CD8-positive, alpha-beta T cell (primary cell): ENCODE measurements at regions of chr1 and their contacts with region 1.

Region 1: GRCh38 chr1:161225534-161226319 is at the start of gene TOMM40L:
- DNase-seq: peak; percentile 71 to 98 (median 86)
- ATAC-seq: peak; percentile 95
- H3K4me3 ChIP-seq: peak within 1 kb of the TSS; percentile 78 to 95
- H3K4me3 Mint-ChIP-seq: peak within 1 kb of the TSS; percentile 100
- H3K27ac ChIP-seq: peak within 1 kb of the TSS; percentile 43 to 64
- H3K27ac Mint-ChIP-seq: peak within 1 kb of the TSS; percentile 97
- H3K4me1 ChIP-seq: peaks cover 40% of the 10 kb centered on the region
- H3K4me1 Mint-ChIP-seq: peaks cover 46% of the 10 kb centered on the region
- H3K27me3 ChIP-seq: no peaks in the 10 kb centered on the region
- H3K27me3 Mint-ChIP-seq: no peaks in the 10 kb centered on the region
- CTCF ChIP-seq: peak; percentile 63
- total RNA-seq, gene TOMM40L: 4.7 to 4.9 TPM

Region 2: GRCh38 chr1:161165742-161166668 is 59.7 kb before region 1 on chr1 and contains the start of gene PPOX:
- CTCF ChIA-PET with region 1: interaction called, 41 read pairs
- POLR2A ChIA-PET with region 1: interaction called, 7 read pairs
- intact Hi-C with region 1: loop called in 1 of 2 experiments (anchors 1 kb)
- DNase-seq: peak; percentile 81 to 97 (median 92)
- ATAC-seq: peak; percentile 91
- H3K4me3 ChIP-seq: peak within 1 kb of the TSS; percentile 58 to 79
- H3K4me3 Mint-ChIP-seq: peak within 1 kb of the TSS; percentile 88
- H3K27ac ChIP-seq: peak within 1 kb of the TSS; percentile 88 to 91
- H3K27ac Mint-ChIP-seq: peak within 1 kb of the TSS; percentile 98
- H3K4me1 ChIP-seq: peaks cover 29% of the 10 kb centered on the region
- H3K4me1 Mint-ChIP-seq: peaks cover 56% of the 10 kb centered on the region
- H3K27me3 ChIP-seq: no peaks in the 10 kb centered on the region
- H3K27me3 Mint-ChIP-seq: no peaks in the 10 kb centered on the region
- CTCF ChIP-seq: peak; percentile 52
- total RNA-seq, gene PPOX: 18.5 to 19.8 TPM

Region 3: GRCh38 chr1:161201828-161202725 is 23.6 kb before region 1 on chr1 and contains the start of gene NDUFS2:
- CTCF ChIA-PET with region 1: interaction called, 94 read pairs
- POLR2A ChIA-PET with region 1: interaction called, 42 read pairs
- intact Hi-C with region 1: loop called (anchors 1 to 2 kb)
- DNase-seq: peak; percentile 90 to 99 (median 95)
- ATAC-seq: peak; percentile 98
- H3K4me3 ChIP-seq: peak within 1 kb of the TSS; percentile 84 to 93
- H3K4me3 Mint-ChIP-seq: peak within 1 kb of the TSS; percentile 95
- H3K27ac ChIP-seq: peak within 1 kb of the TSS; percentile 87
- H3K27ac Mint-ChIP-seq: peak within 1 kb of the TSS; percentile 98
- H3K4me1 ChIP-seq: peaks cover 58% of the 10 kb centered on the region
- H3K4me1 Mint-ChIP-seq: peaks cover 69% of the 10 kb centered on the region
- H3K27me3 ChIP-seq: no peaks in the 10 kb centered on the region
- H3K27me3 Mint-ChIP-seq: no peaks in the 10 kb centered on the region
- CTCF ChIP-seq: no peak
- total RNA-seq, gene NDUFS2: 53.0 to 63.4 TPM

Region 4: DNA sequence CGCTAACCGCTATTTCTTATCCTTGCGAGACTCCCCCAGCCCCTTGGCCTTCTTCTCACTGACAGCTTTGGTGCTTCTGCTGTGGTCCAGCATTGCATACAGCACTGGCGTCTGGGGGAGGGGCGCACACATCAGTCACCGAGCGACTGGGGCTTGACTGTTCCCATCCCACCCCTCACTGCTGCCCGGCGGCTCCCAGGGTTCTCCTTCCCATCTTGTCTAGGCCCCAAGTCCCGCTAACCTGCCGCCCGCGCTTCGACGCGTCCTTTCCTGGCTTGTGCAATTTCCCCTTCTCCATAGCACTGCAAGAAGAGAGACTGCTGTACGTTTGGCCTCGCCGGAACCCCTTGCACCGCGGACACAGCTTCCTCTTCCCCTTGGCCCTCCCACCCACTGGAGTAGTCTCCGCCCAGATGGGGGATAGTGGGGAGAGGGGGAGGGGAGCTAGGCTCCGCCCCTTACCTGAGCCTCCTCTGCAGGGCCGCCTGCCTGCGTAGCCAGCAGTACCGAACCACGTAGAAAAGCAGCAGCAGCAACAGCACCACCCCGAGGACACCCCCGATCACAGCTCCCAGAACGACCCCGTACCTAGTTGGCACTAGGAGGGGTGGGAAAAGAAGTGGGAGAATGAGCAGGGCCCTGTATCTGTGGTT is 80.3 kb after region 1 on chr1:
- CTCF ChIA-PET with region 1: interaction called, 12 read pairs
- POLR2A ChIA-PET with region 1: interaction called, 12 read pairs
- intact Hi-C with region 1: loop called (anchors 1 kb)
- DNase-seq: peak; percentile 73 to 95 (median 89)
- ATAC-seq: peak; percentile 98
- H3K4me3 ChIP-seq: peak overlapping the region; percentile 74 to 93
- H3K4me3 Mint-ChIP-seq: peak overlapping the region; percentile 97
- H3K27ac ChIP-seq: peak overlapping the region; percentile 70 to 71
- H3K27ac Mint-ChIP-seq: peak overlapping the region; percentile 93
- H3K4me1 ChIP-seq: peaks cover 31% of the 10 kb centered on the region
- H3K4me1 Mint-ChIP-seq: peaks cover 40% of the 10 kb centered on the region
- H3K27me3 ChIP-seq: no peaks in the 10 kb centered on the region
- H3K27me3 Mint-ChIP-seq: no peaks in the 10 kb centered on the region
- CTCF ChIP-seq: peak; percentile 54

Region 5: GRCh38 chr1:161342821-161343220 is 117.1 kb after region 1 on chr1:
- CTCF ChIA-PET with region 1: no interaction called
- POLR2A ChIA-PET with region 1: no interaction called
- intact Hi-C with region 1: no loop called
- DNase-seq: no peak
- ATAC-seq: no peak
- H3K4me3 ChIP-seq: no peak overlapping the region
- H3K4me3 Mint-ChIP-seq: no peak overlapping the region
- H3K27ac ChIP-seq: no peak overlapping the region
- H3K27ac Mint-ChIP-seq: no peak overlapping the region
- H3K4me1 ChIP-seq: no peaks in the 10 kb centered on the region
- H3K4me1 Mint-ChIP-seq: peaks cover 7% of the 10 kb centered on the region
- H3K27me3 ChIP-seq: no peaks in the 10 kb centered on the region
- H3K27me3 Mint-ChIP-seq: no peaks in the 10 kb centered on the region
- CTCF ChIP-seq: no peak

Region 6: DNA sequence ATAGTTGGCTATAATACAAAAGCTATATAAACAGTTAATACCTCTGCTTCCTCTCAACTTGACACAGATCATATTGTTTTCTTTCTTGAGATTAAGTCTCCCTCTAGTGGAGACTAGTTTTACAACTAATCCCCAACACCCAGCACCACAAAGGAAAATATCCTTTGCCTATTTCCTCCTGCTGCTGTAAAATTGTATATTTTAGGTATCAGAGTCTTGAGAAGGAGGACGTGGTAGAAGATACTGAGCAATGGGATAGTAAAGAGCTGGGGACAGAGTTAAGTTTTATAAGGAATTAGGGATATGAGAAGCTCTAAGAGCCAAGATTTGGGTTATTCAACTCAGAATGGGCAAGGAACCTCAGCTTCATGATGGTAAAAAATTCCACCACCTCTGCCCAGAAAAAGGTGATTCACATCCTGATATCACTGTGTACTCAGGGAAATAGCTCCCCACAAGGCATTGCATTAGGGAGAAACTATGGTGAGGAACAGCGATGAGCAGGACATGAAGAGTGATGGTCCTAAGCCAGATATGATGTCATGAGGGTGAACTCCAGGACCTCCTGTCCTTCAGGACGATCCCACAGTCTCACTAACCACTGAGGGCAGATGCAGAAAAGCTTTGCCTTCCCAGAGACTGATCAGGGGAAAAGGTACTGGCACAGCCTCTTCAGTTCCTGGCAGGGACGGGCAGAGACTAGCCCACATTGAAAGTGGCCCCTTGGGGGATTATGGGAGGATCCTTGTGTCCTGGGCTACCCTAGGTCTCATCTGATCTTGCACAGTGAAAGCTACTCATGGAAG is 156.7 kb after region 1 on chr1:
- CTCF ChIA-PET with region 1: interaction called, 191 read pairs
- POLR2A ChIA-PET with region 1: interaction called, 4 read pairs
- intact Hi-C with region 1: loop called (anchors 1 kb)
- DNase-seq: peak in 2 of 9 experiments; percentile 60 to 73
- ATAC-seq: peak; percentile 88
- H3K4me3 ChIP-seq: no peak overlapping the region
- H3K4me3 Mint-ChIP-seq: no peak overlapping the region
- H3K27ac ChIP-seq: no peak overlapping the region
- H3K27ac Mint-ChIP-seq: no peak overlapping the region
- H3K4me1 ChIP-seq: peaks cover 4% of the 10 kb centered on the region
- H3K4me1 Mint-ChIP-seq: peaks cover 12% of the 10 kb centered on the region
- H3K27me3 ChIP-seq: no peaks in the 10 kb centered on the region
- H3K27me3 Mint-ChIP-seq: no peaks in the 10 kb centered on the region
- CTCF ChIP-seq: peak; percentile 83